AG04449 (cell line): ENCODE measurements at regions of chr12 and their contacts with region 1.

Region 1: GRCh38 chr12:91811481-91812287 is 334.0 kb downstream of the BTG1 start:
- DNase-seq: no peak
- H3K4me3 ChIP-seq: no peak overlapping the region
- CTCF ChIP-seq: peak; percentile 54

Region 2: GRCh38 chr12:91663310-91663709 is 148.4 kb before region 1 on chr12:
- CTCF ChIA-PET with region 1: no interaction called
- POLR2A ChIA-PET with region 1: no interaction called
- DNase-seq: no peak
- H3K4me3 ChIP-seq: no peak overlapping the region
- CTCF ChIP-seq: no peak

Region 3: DNA sequence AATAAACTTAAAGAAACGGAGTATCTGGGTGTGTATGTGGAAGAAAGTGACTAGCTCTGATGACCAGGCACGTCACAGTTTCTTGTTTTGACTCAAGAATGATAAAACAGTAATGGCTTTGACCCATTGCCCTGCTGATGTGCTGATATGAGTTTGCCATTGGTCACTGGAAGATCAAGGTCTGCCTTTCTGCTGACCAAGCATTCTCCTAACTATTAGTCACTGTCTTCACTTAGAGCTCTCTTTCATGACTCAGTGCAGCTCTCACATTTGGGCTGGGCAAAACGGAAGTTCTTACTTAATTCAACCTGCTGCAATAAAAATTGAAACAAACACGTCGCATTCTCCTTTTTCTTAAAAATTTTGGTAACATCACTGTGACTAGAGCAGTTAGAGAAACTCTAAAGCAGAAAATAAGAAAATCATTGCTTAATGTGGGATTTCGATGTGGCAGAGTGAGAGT is 32.7 kb before region 1 on chr12:
- CTCF ChIA-PET with region 1: interaction called, 21 read pairs
- POLR2A ChIA-PET with region 1: no interaction called
- DNase-seq: peak; percentile 51
- H3K4me3 ChIP-seq: no peak overlapping the region
- CTCF ChIP-seq: no peak

Region 4: GRCh38 chr12:91801048-91801447 is 10.6 kb before region 1 on chr12:
- CTCF ChIA-PET with region 1: interaction called, 38 read pairs
- POLR2A ChIA-PET with region 1: no interaction called
- DNase-seq: no peak
- H3K4me3 ChIP-seq: no peak overlapping the region
- CTCF ChIP-seq: no peak

Region 5: DNA sequence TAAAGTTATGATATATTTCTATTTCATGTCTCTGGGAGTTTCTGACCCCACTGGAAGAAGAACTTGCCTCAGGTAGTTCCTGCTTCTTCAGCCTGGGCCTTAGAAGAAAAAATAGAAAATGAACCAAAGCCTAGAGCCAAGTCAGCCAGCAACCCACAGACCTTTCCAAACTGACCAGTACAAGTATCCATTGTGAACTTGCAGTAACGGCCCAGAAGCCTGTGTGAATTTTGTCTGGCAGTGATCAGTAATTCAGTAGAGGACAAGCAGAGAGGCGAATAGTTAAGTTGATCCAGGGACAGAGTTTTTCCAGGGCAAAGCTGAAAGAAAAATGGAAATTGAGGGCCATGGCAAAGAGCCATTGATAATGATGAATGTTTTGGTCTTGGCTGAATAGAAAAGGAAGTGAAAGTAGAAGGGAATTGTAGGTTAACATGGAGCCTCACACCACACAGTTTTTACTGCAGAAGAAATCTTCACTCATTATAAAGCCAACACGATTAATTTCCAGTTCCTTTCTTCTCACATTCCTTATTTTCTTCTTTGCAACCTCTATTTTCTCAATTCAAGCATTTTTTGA is 22.2 kb after region 1 on chr12:
- CTCF ChIA-PET with region 1: interaction called, 25 read pairs
- POLR2A ChIA-PET with region 1: no interaction called
- DNase-seq: no peak
- H3K4me3 ChIP-seq: no peak overlapping the region
- CTCF ChIP-seq: no peak

Region 6: DNA sequence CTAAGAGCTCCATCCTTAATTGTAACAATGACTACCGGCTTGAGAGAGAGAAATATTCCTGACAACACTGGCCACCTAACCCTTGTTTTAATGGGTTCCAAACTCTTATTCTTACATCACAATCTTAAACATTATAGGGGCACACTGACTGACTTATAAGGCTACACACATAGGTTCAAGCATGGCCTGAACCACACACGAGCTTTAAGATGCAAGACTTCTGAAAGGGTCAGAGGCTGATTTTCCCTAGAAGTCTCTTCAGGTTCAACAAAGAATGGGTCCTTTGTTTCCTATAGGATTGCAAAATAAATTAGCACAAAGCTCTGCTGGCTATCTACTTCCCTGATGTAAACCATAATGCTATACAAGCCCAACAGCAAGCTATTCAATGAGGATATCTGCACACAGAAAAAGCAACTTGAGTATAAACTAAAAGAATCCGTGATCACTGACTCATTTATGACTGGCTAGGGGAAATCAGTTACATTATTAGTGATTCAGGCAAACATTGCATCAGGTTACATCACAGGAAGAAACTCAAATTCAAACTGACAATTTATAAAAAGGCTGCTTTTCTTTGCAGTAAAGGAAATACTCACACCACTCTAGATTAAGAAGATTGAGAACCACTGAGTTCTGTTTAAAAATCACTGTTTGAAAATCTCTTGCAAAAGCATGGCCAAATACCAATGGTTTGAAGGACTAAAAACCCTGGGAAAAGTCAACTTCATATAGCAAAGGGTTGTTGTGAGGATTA is 325.5 kb after region 1 on chr12:
- CTCF ChIA-PET with region 1: interaction called, 19 read pairs
- POLR2A ChIA-PET with region 1: no interaction called
- DNase-seq: peak; percentile 65
- H3K4me3 ChIP-seq: no peak overlapping the region
- CTCF ChIP-seq: no peak

Region 7: GRCh38 chr12:92408072-92408900 is 596.6 kb after region 1 on chr12:
- CTCF ChIA-PET with region 1: interaction called, 10 read pairs
- POLR2A ChIA-PET with region 1: no interaction called
- DNase-seq: no peak
- H3K4me3 ChIP-seq: no peak overlapping the region
- CTCF ChIP-seq: peak; percentile 71